Activated CD4-positive, alpha-beta T cell treated with anti-CD3 and anti-CD28 coated beads for 36 hours (primary cell): ENCODE measurements at regions of chr7 and their contacts with region 1.

Region 1: GRCh38 chr7:149714050-149714909 is 59.1 kb downstream of the ZNF467 start:
- DNase-seq: peak; percentile 97
- ATAC-seq: peak; percentile 89
- H3K4me3 Mint-ChIP-seq: peak overlapping the region; percentile 82
- H3K27ac Mint-ChIP-seq: peak overlapping the region; percentile 78
- H3K4me1 Mint-ChIP-seq: peaks cover 27% of the 10 kb centered on the region
- H3K27me3 Mint-ChIP-seq: no peaks in the 10 kb centered on the region

Region 2: DNA sequence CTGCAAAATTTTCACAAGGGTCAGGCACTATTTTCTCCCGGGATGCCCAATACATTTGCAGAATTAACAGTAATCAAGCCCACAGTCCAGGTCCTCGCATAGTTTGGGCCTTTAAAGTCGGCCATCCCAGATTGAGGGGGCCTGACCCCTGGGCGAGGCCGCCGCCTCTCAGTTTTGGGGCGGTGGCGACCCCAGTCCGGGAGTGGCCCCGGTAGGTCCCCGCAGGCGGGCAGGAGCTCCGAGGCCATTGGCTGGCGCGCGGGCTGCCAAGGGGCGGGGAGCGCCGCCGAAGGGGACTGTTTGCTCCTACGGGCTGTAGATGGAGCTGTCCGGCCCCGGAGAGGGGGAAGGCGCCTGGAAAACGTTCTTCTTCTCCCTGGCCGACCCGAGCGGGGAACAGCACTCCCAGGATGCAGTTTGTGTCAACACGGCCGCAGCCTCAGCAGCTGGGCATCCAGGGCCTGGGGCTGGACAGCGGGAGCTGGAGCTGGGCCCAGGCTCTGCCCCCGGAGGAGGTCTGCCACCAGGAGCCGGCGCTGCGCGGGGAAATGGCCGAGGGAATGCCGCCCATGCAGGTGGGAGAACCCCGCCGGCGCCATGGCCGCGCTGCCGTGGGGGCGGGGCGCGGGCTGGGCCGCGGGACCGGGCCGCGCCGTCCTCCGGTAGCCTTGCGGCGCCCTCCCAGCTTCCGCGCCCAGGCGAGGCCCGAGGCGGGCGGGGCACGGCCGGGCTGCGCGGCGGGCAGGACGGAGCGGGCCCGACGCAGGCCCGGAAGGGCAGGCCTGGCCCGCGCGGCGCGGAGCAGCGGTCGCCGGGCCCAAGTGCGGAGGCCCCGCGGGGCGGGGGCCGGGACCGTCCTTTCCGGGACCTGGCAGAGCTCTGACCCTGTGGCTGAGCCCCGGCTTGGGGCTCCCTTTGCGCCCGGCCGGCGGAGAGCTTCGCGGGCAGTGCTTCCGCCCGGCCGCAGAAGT is 518.8 kb before region 1 on chr7 and contains the start of gene ZNF282:
- CTCF ChIA-PET with region 1: no interaction called
- POLR2A ChIA-PET with region 1: no interaction called
- intact Hi-C with region 1: loop called in 1 of 2 experiments (anchors 10 kb)
- DNase-seq: peak; percentile 89
- ATAC-seq: peak; percentile 91
- H3K4me3 Mint-ChIP-seq: peak within 1 kb of the TSS; percentile 95
- H3K27ac Mint-ChIP-seq: peak within 1 kb of the TSS; percentile 94
- H3K4me1 Mint-ChIP-seq: peaks cover 42% of the 10 kb centered on the region
- H3K27me3 Mint-ChIP-seq: no peaks in the 10 kb centered on the region
- total RNA-seq, gene ZNF282: 41.1 to 46.3 TPM

Region 3: DNA sequence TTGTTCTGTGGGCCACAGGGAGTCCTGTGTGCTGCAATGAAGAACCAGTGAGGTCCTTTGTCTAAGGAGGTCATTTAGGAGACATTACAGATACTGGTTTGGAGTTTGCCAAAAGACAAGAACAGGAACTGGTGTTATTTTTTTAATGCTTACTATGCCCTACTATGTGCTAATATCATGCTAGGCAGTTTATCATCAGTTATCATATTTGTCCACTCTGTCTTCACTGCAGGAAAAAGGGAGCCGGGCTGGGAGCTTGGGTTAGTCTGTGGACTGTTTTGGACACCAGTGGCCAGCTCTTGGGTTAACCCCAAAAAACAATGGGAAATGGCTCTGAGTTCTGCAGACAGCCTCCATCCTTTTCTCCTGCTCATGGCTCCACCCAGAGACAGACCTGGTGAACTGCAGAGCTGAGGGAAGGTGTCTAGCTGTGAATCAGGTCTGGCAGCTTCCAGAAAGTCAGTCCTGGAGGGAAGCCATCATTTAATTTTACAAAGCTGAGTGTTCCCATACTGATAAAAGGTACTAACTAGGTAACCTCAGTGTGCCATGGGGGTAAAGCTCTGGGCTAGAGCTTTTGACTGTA is 115.5 kb before region 1 on chr7:
- CTCF ChIA-PET with region 1: no interaction called
- POLR2A ChIA-PET with region 1: no interaction called
- intact Hi-C with region 1: loop called in 1 of 2 experiments (anchors 1 kb)
- DNase-seq: peak; percentile 65
- ATAC-seq: peak; percentile 38
- H3K4me3 Mint-ChIP-seq: no peak overlapping the region
- H3K27ac Mint-ChIP-seq: no peak overlapping the region
- H3K4me1 Mint-ChIP-seq: peaks cover 34% of the 10 kb centered on the region
- H3K27me3 Mint-ChIP-seq: no peaks in the 10 kb centered on the region

Region 4: DNA sequence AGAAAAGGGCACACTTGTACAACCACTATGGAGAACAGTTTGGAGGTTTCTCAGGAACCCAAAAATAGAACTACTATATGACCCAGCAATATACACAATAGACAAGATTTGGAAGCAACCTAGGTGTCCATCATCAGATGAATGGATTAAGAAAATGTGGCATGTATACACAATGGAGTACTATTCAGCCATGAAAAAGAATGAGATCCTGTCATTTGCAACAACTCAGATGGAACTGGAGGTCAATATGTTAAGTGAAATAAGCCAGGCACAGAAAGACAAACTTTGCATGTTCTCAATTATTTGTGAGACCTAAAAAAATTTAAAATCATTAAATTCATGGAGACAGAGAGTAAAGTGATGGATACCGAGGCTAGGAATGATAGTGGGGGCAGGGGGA is 59.7 kb before region 1 on chr7:
- CTCF ChIA-PET with region 1: no interaction called
- POLR2A ChIA-PET with region 1: no interaction called
- intact Hi-C with region 1: no loop called
- DNase-seq: no peak
- ATAC-seq: no peak
- H3K4me3 Mint-ChIP-seq: no peak overlapping the region
- H3K27ac Mint-ChIP-seq: no peak overlapping the region
- H3K4me1 Mint-ChIP-seq: no peaks in the 10 kb centered on the region
- H3K27me3 Mint-ChIP-seq: peaks cover 40% of the 10 kb centered on the region

Region 5: GRCh38 chr7:149732111-149732561 is 17.9 kb after region 1 on chr7:
- CTCF ChIA-PET with region 1: no interaction called
- POLR2A ChIA-PET with region 1: no interaction called
- intact Hi-C with region 1: no loop called
- DNase-seq: no peak
- ATAC-seq: no peak
- H3K4me3 Mint-ChIP-seq: no peak overlapping the region
- H3K27ac Mint-ChIP-seq: no peak overlapping the region
- H3K4me1 Mint-ChIP-seq: peaks cover 9% of the 10 kb centered on the region
- H3K27me3 Mint-ChIP-seq: peaks cover 7% of the 10 kb centered on the region

Region 6: GRCh38 chr7:149753401-149754233 is 39.3 kb after region 1 on chr7:
- CTCF ChIA-PET with region 1: no interaction called
- POLR2A ChIA-PET with region 1: no interaction called
- intact Hi-C with region 1: no loop called
- DNase-seq: no peak
- ATAC-seq: no peak
- H3K4me3 Mint-ChIP-seq: no peak overlapping the region
- H3K27ac Mint-ChIP-seq: no peak overlapping the region
- H3K4me1 Mint-ChIP-seq: no peaks in the 10 kb centered on the region
- H3K27me3 Mint-ChIP-seq: no peaks in the 10 kb centered on the region

Region 7: GRCh38 chr7:149771721-149772240 is 57.5 kb after region 1 on chr7:
- CTCF ChIA-PET with region 1: no interaction called
- POLR2A ChIA-PET with region 1: interaction called, 5 read pairs
- intact Hi-C with region 1: loop called (anchors 1 kb)
- DNase-seq: peak; percentile 93
- ATAC-seq: peak; percentile 98
- H3K4me3 Mint-ChIP-seq: peak overlapping the region; percentile 59
- H3K27ac Mint-ChIP-seq: no peak overlapping the region
- H3K4me1 Mint-ChIP-seq: peaks cover 2% of the 10 kb centered on the region
- H3K27me3 Mint-ChIP-seq: peaks cover 9% of the 10 kb centered on the region

Region 8: GRCh38 chr7:150322833-150323681 is 608.8 kb after region 1 on chr7 and contains the starts of genes ACTR3C and LRRC61:
- CTCF ChIA-PET with region 1: no interaction called
- POLR2A ChIA-PET with region 1: no interaction called
- intact Hi-C with region 1: loop called in 1 of 2 experiments (anchors 1 kb)
- DNase-seq: peak; percentile 78
- ATAC-seq: peak; percentile 24
- H3K4me3 Mint-ChIP-seq: peak within 1 kb of the TSS; percentile 91
- H3K27ac Mint-ChIP-seq: peak within 1 kb of the TSS; percentile 99
- H3K4me1 Mint-ChIP-seq: peaks cover 52% of the 10 kb centered on the region
- H3K27me3 Mint-ChIP-seq: no peaks in the 10 kb centered on the region
- total RNA-seq, gene ACTR3C: 3.2 to 4.7 TPM
- total RNA-seq, gene LRRC61: 13.0 to 17.4 TPM

Region 9: DNA sequence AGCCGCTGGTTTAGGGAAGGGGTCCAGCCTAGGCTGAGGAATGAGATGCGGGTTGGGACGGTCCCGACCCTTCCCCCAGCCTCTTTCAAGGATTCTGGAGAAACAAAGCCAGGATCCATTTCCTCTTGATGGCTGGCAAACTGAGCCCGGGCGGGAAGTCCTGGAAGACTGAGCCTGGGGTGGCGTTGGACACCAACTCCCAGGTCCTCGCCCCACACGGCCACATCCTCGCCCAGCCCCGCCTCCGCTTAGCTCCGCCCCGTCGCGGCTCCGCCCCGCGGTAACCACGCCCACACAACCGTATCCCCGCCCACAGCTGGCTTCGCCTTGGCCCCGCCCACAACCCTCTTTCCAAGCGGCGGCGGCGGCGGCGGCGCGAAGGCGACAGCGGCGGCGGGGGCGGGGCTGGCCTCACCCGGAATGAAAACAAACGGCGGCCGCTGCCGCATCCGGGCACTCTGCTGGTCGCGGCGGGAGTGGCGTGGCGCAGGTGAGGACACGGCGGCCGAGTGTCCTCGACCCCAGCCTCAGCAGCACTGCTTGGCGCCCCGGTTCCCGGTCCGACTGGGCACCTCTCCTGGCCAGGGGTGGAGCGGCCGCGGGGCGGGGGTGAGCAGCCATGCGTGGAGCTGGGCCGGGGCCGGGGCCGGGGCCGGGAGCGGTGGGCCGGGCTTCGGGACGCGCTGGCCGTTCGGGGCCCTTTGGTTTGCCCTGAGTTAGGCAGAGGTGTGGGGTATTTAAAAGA is 1627.2 kb after region 1 on chr7 and contains the start of gene NUB1:
- CTCF ChIA-PET with region 1: no interaction called
- POLR2A ChIA-PET with region 1: no interaction called
- intact Hi-C with region 1: loop called in 1 of 2 experiments (anchors 2 kb)
- DNase-seq: peak; percentile 96
- ATAC-seq: peak; percentile 82
- H3K4me3 Mint-ChIP-seq: peak within 1 kb of the TSS; percentile 76
- H3K27ac Mint-ChIP-seq: peak within 1 kb of the TSS; percentile 78
- H3K4me1 Mint-ChIP-seq: peaks cover 46% of the 10 kb centered on the region
- H3K27me3 Mint-ChIP-seq: no peaks in the 10 kb centered on the region
- total RNA-seq, gene NUB1: 51.4 to 70.4 TPM